ENCODE measurements at regions of chr4 and their contacts with region 1.

Region 1: DNA sequence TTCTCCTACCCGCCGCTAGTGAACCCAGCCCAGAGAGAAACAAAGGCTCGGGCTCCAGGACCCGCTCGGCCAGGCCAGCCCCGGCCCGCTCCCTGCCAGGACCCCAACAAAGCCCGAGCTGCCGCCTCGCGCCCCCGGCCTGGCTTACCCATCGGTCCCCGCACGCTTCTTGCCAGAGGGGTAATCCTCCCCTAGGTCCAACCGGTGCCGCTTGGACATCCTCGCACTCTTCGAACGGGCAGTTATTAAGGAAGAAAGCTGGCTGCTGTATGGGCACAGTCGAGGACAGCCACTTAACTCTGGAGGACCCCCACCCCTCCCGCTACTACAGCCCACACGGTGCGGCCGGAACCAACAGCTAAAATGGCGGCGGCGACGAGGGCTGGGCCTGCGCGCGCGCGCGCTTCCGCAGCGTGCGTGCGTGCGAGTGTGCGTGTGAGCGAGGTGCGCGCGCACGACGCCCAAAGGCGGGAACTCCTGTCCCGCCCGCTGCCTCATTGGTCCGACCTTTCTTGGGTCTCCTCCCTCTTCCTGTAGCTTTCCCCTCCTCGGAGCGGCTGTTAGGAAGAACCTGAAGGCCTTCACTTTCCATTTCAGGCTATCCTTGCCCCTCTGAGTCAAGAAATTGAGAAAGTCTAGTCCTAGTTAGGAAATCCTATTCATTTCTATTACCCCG is at the start of gene DHX15:
- DNase-seq: peak; percentile 92
- ATAC-seq: peak; percentile 94
- H3K4me3 ChIP-seq: peak within 1 kb of the TSS; percentile 96 to 99 (median 98)
- H3K27ac ChIP-seq: peak within 1 kb of the TSS; percentile 96
- H3K4me1 ChIP-seq: peaks cover 46% of the 10 kb centered on the region
- H3K27me3 ChIP-seq: no peaks in the 10 kb centered on the region; a peak in 1 of 5 replicates
- CTCF ChIP-seq: no peak
- EP300 ChIP-seq: no peak
- POLR2A ChIP-seq: peak; percentile 83 to 85
- RAD21 ChIP-seq: 0 out of 2 replicates have a peak, but pooled peaks have one; percentile 7
- total RNA-seq, gene DHX15: 165 and 198 TPM in 2 replicates

Region 2: GRCh38 chr4:24533364-24533763 is 50.9 kb before region 1 on chr4:
- CTCF ChIA-PET with region 1: no interaction called
- POLR2A ChIA-PET with region 1: no interaction called
- in situ Hi-C with region 1: no loop called
- intact Hi-C with region 1: no loop called
- DNase-seq: no peak
- ATAC-seq: no peak
- H3K4me3 ChIP-seq: no peak overlapping the region
- H3K27ac ChIP-seq: no peak overlapping the region
- H3K4me1 ChIP-seq: no peaks in the 10 kb centered on the region
- H3K27me3 ChIP-seq: no peaks in the 10 kb centered on the region
- CTCF ChIP-seq: no peak
- EP300 ChIP-seq: no peak
- POLR2A ChIP-seq: no peak
- RAD21 ChIP-seq: no peak

Region 3: DNA sequence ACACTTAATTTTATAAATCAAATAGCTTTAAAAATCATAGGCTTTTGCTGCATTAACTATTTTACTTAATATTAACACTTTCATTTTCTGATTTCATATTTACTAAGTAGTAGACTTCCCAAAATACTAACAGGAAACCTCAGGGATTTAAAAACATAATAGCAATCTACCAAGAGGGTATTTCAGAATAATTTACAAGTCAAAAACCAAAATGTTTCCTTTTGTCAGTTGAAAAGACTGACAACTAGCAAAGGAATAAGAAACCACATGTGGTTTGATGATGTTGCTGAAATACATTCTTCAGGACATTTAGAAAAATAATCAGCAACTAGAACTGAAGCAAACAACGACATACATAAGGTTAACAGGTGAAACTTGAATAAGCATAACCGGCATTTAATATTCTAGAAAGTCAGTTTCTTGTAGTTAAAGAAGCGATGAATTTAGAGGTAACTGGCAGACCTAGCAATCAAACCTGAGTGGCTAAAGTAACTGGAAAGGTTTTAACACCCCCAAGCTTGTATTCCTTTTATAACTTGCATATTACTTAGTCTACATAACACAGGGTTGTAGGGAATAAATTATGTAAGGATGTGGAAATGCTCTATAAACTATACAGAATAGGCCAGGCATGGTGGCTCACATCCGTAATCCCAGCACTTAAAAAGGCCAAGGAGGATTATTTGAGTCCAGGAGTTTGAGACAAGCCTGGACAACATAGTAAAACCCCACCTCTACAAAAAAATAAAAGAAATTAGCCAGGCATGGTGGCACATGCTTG is 39.9 kb before region 1 on chr4:
- CTCF ChIA-PET with region 1: no interaction called
- POLR2A ChIA-PET with region 1: no interaction called
- in situ Hi-C with region 1: no loop called
- intact Hi-C with region 1: loop called (anchors 5 kb)
- DNase-seq: no peak
- ATAC-seq: no peak
- H3K4me3 ChIP-seq: no peak overlapping the region
- H3K27ac ChIP-seq: no peak overlapping the region
- H3K4me1 ChIP-seq: no peaks in the 10 kb centered on the region
- H3K27me3 ChIP-seq: no peaks in the 10 kb centered on the region
- CTCF ChIP-seq: no peak
- EP300 ChIP-seq: no peak
- POLR2A ChIP-seq: no peak
- RAD21 ChIP-seq: no peak

Region 4: GRCh38 chr4:24560868-24561368 is 23.4 kb before region 1 on chr4:
- CTCF ChIA-PET with region 1: no interaction called
- POLR2A ChIA-PET with region 1: interaction called, 8 read pairs
- in situ Hi-C with region 1: no loop called
- intact Hi-C with region 1: loop called (anchors 2 kb)
- DNase-seq: no peak
- ATAC-seq: no peak
- H3K4me3 ChIP-seq: no peak overlapping the region
- H3K27ac ChIP-seq: no peak overlapping the region
- H3K4me1 ChIP-seq: peaks cover 64% of the 10 kb centered on the region
- H3K27me3 ChIP-seq: no peaks in the 10 kb centered on the region; a peak in 1 of 5 replicates
- CTCF ChIP-seq: no peak
- EP300 ChIP-seq: no peak
- POLR2A ChIP-seq: no peak
- RAD21 ChIP-seq: no peak

Region 5: GRCh38 chr4:24573582-24573981 is 10.7 kb before region 1 on chr4:
- CTCF ChIA-PET with region 1: no interaction called
- POLR2A ChIA-PET with region 1: interaction called, 11 read pairs
- in situ Hi-C with region 1: no loop called
- intact Hi-C with region 1: no loop called
- DNase-seq: no peak
- ATAC-seq: no peak
- H3K4me3 ChIP-seq: no peak overlapping the region
- H3K27ac ChIP-seq: no peak overlapping the region
- H3K4me1 ChIP-seq: peaks cover 62% of the 10 kb centered on the region
- H3K27me3 ChIP-seq: no peaks in the 10 kb centered on the region
- CTCF ChIP-seq: no peak
- EP300 ChIP-seq: no peak
- POLR2A ChIP-seq: no peak
- RAD21 ChIP-seq: no peak

Region 6: DNA sequence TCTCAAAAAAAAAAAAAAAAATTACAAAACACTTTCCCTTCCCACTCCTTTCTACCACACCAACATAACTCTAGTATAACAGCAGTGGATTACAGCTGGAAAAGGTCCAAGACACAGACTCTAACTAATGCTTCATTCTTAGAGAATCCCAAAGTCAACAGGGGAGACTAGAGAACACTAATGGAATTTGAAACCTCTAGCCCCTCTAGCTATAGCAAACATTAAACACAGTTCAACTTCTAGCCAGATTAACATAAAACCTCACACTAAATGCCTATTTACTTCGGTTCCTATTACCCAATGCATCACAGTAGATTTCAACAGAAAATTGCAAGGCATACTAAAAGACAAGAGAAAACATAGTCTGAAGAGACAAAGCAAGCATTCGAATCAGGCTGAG is 10.6 kb after region 1 on chr4:
- CTCF ChIA-PET with region 1: no interaction called
- POLR2A ChIA-PET with region 1: interaction called, 19 read pairs
- in situ Hi-C with region 1: no loop called
- intact Hi-C with region 1: loop called (anchors 1 kb)
- DNase-seq: peak; percentile 90
- ATAC-seq: peak; percentile 86
- H3K4me3 ChIP-seq: no peak overlapping the region
- H3K27ac ChIP-seq: no peak overlapping the region
- H3K4me1 ChIP-seq: peaks cover 47% of the 10 kb centered on the region
- H3K27me3 ChIP-seq: no peaks in the 10 kb centered on the region
- CTCF ChIP-seq: no peak
- EP300 ChIP-seq: no peak
- POLR2A ChIP-seq: no peak
- RAD21 ChIP-seq: no peak